HepG2 (cell line): ENCODE measurements at regions of chr19 and their contacts with region 1.

Region 1: GRCh38 chr19:48965040-48965805 is at the start of gene FTL:
- DNase-seq: peak; percentile 95
- ATAC-seq: peak; percentile 17
- H3K4me3 ChIP-seq: peak within 1 kb of the TSS; percentile 80 to 99 (median 89)
- H3K27ac ChIP-seq: peak within 1 kb of the TSS; percentile 100
- H3K4me1 ChIP-seq: peaks cover 49% of the 10 kb centered on the region
- H3K27me3 ChIP-seq: no peaks in the 10 kb centered on the region; a peak in 1 of 5 replicates
- CTCF ChIP-seq: no peak
- EP300 ChIP-seq: peak in 1 of 2 experiments; percentile 51; a peak in 1 of 4 replicates
- POLR2A ChIP-seq: peak; percentile 99 to 100
- RAD21 ChIP-seq: peak; percentile 69
- total RNA-seq, gene FTL: 3,909 and 8,800 TPM in 2 replicates

Region 2: DNA sequence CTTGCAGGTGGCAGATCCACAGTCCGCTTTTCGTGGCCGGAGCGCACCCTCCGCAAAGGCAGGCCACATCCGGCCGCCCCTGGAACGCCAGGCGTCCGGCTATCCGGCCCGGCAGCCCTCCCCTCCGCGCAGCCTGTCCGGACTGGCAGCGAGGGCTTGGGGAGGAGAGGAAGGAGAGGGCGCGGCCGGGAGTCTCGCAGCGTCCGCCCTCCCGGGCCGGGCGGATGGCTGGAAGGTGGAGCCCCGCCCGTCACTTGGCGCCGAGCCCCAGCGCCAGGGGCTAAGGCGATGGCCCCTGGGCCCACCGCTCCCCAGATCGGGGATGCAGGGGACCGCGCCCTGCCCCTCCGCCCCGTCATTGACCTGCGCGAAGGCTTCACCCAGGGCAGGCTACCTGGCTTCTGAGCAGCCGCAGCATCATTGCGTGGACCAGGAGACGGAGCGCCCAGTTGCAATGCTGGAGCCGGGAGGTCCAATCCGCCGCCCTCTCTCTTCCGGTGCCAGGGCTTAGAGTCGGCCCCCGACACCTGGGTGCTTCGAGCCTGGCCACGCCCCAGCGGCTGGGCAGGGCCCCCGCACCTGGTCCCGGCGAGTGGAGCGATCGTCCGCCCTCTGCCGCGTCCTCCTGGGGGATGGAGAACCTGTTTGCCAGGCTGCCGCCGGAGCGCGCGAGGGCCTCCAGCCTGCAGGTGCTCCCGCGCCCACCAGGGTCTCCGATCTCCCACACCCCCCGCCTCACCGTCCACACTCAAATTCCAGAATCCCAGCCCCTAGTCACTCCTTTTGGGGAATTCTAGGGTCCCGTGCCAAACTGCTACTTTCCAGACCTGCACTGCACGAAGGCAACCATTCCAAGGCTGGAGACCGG is 212.5 kb before region 1 on chr19 and contains the start of gene FUT1:
- CTCF ChIA-PET with region 1: no interaction called
- POLR2A ChIA-PET with region 1: no interaction called
- in situ Hi-C with region 1: no loop called
- intact Hi-C with region 1: no loop called
- DNase-seq: no peak
- ATAC-seq: no peak
- H3K4me3 ChIP-seq: no peak within 1 kb of the TSS
- H3K27ac ChIP-seq: no peak within 1 kb of the TSS
- H3K4me1 ChIP-seq: peaks cover 42% of the 10 kb centered on the region
- H3K27me3 ChIP-seq: no peaks in the 10 kb centered on the region
- CTCF ChIP-seq: no peak
- EP300 ChIP-seq: no peak
- POLR2A ChIP-seq: no peak
- RAD21 ChIP-seq: no peak
- total RNA-seq, gene FUT1: 0.07 TPM in 2 replicates

Region 3: DNA sequence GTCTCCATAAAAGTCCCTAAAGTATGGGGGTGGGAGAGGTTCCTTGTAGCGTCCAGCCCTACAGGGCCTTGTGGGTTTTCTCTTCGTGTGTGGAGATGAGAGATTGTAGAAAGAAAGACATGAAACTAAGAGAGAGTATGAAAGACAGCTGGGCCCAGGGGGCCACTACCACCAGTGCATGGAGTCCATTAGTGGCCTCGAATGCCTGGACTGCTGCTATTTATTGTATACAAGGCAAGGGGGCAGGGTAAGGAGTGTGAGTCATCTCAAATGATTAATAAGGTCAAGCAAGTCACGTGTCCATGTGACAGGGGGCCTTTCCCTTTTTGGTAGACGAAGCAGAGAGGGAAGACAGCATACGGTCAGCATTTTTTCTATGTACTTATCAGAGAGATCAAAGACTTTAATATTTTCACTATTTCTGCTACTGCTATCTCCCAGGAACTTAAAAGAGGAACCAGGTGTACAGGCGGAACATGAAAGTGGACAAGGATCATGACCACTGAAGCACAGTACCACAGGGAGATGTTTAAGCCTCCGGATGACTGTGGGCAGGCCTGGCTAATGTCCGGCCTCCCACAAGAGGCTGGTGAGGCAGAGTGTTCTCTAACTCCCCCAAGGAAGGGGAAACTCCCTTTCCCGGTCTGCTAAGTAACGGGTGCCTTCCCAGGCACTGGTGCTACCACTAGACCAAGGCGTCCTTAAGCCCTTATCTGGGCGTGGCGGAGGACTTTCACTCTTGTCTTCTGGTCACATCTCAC is 184.4 kb before region 1 on chr19:
- CTCF ChIA-PET with region 1: no interaction called
- POLR2A ChIA-PET with region 1: no interaction called
- in situ Hi-C with region 1: no loop called
- intact Hi-C with region 1: loop called (anchors 10 kb)
- DNase-seq: peak; percentile 88
- ATAC-seq: peak; percentile 56
- H3K4me3 ChIP-seq: peak overlapping the region in 1 of 3 experiments; percentile 55; a peak in 2 of 6 replicates
- H3K27ac ChIP-seq: no peak overlapping the region
- H3K4me1 ChIP-seq: peaks cover 54% of the 10 kb centered on the region
- H3K27me3 ChIP-seq: no peaks in the 10 kb centered on the region; a peak in 1 of 5 replicates
- CTCF ChIP-seq: no peak
- EP300 ChIP-seq: peak in 1 of 2 experiments; percentile 15; a peak in 1 of 4 replicates
- POLR2A ChIP-seq: no peak
- RAD21 ChIP-seq: no peak

Region 4: DNA sequence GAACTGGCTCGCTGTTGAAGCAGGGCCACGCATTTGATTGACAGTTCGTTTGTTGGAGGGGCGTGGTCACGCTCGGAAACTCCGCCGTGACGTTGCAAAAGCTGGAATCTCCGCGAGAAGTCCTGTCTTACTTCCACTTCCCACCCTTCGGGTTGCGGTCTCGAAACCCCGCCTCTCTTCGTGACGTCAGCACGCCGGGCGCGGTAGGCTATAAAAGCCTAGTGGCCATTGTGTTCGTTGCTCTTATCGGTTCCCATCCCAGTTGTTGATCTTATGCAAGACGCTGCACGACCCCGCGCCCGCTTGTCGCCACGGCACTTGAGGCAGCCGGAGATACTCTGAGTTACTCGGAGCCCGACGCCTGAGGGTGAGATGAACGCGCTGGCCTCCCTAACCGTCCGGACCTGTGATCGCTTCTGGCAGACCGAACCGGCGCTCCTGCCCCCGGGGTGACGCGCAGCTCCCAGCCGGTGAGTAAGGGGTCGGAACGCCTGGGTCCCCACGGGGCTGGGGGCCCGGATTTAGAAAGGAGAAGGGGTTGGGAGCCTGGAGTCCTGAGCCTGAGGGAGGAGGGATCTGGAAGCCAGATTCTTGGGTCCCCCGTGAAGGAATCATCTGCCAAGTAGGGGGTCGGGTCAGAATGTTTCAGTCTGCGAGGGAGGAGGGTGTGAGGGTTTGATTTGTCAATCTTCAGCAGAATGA is 92.9 kb before region 1 on chr19 and contains the start of gene PPP1R15A:
- CTCF ChIA-PET with region 1: no interaction called
- POLR2A ChIA-PET with region 1: interaction called, 88 read pairs
- in situ Hi-C with region 1: loop called (anchors 5 kb)
- intact Hi-C with region 1: loop called (anchors 10 kb)
- DNase-seq: peak; percentile 95
- ATAC-seq: peak; percentile 50
- H3K4me3 ChIP-seq: peak within 1 kb of the TSS; percentile 93 to 97 (median 94)
- H3K27ac ChIP-seq: peak within 1 kb of the TSS; percentile 99
- H3K4me1 ChIP-seq: peaks cover 50% of the 10 kb centered on the region
- H3K27me3 ChIP-seq: no peaks in the 10 kb centered on the region; a peak in 1 of 5 replicates
- CTCF ChIP-seq: 0 out of 2 replicates have a peak, but pooled peaks have one; percentile 3
- EP300 ChIP-seq: no peak; a peak in 1 of 4 replicates
- POLR2A ChIP-seq: peak; percentile 99
- RAD21 ChIP-seq: no peak
- total RNA-seq, gene PPP1R15A: 7.8 and 18.5 TPM in 2 replicates

Region 5: DNA sequence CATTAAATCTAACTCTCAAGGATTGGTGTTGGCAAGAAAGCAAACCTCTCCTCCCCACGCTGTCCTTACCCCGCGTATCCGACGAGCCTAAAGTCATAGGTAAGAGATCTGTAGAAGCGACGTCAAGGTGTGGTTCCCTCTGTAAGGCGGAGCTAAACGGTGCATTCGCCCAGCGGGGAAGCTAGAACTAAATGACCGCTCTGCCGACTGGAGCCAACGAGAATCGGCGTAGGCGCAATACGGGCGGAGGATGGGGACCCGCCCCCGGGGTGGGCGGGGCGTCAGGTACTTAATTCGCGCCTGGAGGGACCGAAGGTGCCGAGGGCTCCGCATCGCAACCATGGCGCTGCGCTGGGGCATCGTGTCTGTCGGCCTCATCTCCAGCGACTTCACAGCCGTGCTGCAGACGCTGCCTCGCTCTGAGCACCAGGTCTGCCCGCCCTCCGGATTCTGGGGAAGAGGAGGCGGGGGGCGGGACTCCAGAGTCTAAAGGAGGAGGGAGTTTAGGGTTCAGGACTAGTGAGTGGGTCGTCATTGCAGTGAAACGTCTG is 31.8 kb before region 1 on chr19 and contains the start of gene DHDH:
- CTCF ChIA-PET with region 1: interaction called, 4 read pairs
- POLR2A ChIA-PET with region 1: interaction called, 20 read pairs
- in situ Hi-C with region 1: no loop called
- intact Hi-C with region 1: loop called (anchors 2 kb)
- DNase-seq: peak; percentile 74
- ATAC-seq: peak; percentile 90
- H3K4me3 ChIP-seq: peak within 1 kb of the TSS; percentile 36 to 71 (median 51)
- H3K27ac ChIP-seq: no peak within 1 kb of the TSS
- H3K4me1 ChIP-seq: peaks cover 31% of the 10 kb centered on the region
- H3K27me3 ChIP-seq: peaks cover 0 to 1% of the 10 kb centered on the region in 2 experiments; a peak in 1 of 5 replicates
- CTCF ChIP-seq: no peak
- EP300 ChIP-seq: no peak
- POLR2A ChIP-seq: peak in 1 of 2 experiments; percentile 72; a peak in 2 of 4 replicates
- RAD21 ChIP-seq: no peak
- total RNA-seq, gene DHDH: 0.13 and 0.29 TPM in 2 replicates

Region 6: GRCh38 chr19:48954595-48955310 is 10.5 kb before region 1 on chr19 and contains the start of gene BAX:
- CTCF ChIA-PET with region 1: no interaction called
- POLR2A ChIA-PET with region 1: interaction called, 153 read pairs
- in situ Hi-C with region 1: no loop called
- intact Hi-C with region 1: no loop called
- DNase-seq: peak; percentile 96
- ATAC-seq: peak; percentile 81
- H3K4me3 ChIP-seq: peak within 1 kb of the TSS; percentile 76 to 84 (median 81)
- H3K27ac ChIP-seq: peak within 1 kb of the TSS; percentile 82
- H3K4me1 ChIP-seq: peaks cover 85% of the 10 kb centered on the region
- H3K27me3 ChIP-seq: no peaks in the 10 kb centered on the region
- CTCF ChIP-seq: peak; percentile 47
- EP300 ChIP-seq: peak in 1 of 2 experiments; percentile 25; a peak in 1 of 4 replicates
- POLR2A ChIP-seq: peak in 1 of 2 experiments; percentile 69; a peak in 3 of 4 replicates
- RAD21 ChIP-seq: peak; percentile 71
- total RNA-seq, gene BAX: 167 and 176 TPM in 2 replicates